BJ (cell line): ENCODE measurements at regions of chr12 and their contacts with region 1.

Region 1: GRCh38 chr12:71636704-71637115 is 26.9 kb downstream of the ZFC3H1 start:
- DNase-seq: peak; percentile 9
- H3K4me3 ChIP-seq: no peak overlapping the region
- H3K27me3 ChIP-seq: no peaks in the 10 kb centered on the region
- CTCF ChIP-seq: peak; percentile 80

Region 2: DNA sequence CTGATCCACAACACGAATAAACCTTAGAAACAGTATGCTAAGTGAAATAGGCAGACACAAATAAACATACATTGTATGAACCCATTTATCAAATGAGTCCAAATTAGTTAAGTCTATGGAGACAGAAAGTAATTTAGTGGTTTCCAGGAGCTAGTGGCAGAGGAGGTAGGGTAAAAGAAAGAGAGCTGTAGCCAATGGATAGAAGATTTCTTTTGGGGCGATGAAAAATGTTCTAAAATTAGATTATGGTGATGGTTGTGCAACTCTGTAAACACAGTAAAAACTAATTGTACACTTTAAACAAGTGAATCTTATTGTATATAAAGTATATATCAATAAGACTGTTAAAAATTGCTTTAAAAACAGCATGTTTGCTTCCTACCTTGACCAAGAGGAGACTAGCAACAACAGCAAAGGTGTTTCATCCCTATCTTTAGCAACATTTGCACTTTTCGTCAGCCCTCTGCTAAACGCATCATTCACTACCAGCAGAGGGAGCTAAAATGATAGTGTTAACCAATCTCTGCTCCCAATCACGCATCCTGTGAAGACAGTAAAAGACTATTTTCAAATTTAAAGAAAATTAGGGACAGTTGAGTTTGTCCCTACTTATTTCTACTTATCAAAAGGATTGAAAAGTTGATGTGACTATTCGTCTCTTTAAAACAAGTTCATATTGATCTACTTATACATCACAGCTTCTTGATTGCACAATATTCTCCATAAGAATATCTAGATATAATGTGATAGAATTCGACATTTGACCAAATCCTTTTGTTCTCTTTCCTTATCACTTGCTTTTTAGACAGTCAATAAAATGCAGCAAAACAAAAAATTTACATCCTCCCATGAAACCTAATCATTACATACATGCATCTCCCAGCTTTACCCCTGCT is 221.1 kb before region 1 on chr12:
- CTCF ChIA-PET with region 1: interaction called, 12 read pairs
- POLR2A ChIA-PET with region 1: no interaction called
- DNase-seq: no peak
- H3K4me3 ChIP-seq: no peak overlapping the region
- H3K27me3 ChIP-seq: 0 out of 2 replicates have a peak, but pooled peaks cover 2% of the 10 kb centered on the region
- CTCF ChIP-seq: peak; percentile 76

Region 3: GRCh38 chr12:71567537-71567936 is 69.2 kb before region 1 on chr12:
- CTCF ChIA-PET with region 1: no interaction called
- POLR2A ChIA-PET with region 1: no interaction called
- DNase-seq: no peak
- H3K4me3 ChIP-seq: no peak overlapping the region
- H3K27me3 ChIP-seq: 0 out of 2 replicates have a peak, but pooled peaks cover 1% of the 10 kb centered on the region
- CTCF ChIP-seq: no peak

Region 4: GRCh38 chr12:71605039-71605438 is 31.7 kb before region 1 on chr12:
- CTCF ChIA-PET with region 1: interaction called, 11 read pairs
- POLR2A ChIA-PET with region 1: no interaction called
- DNase-seq: no peak
- H3K4me3 ChIP-seq: no peak overlapping the region
- H3K27me3 ChIP-seq: no peaks in the 10 kb centered on the region
- CTCF ChIP-seq: no peak

Region 5: DNA sequence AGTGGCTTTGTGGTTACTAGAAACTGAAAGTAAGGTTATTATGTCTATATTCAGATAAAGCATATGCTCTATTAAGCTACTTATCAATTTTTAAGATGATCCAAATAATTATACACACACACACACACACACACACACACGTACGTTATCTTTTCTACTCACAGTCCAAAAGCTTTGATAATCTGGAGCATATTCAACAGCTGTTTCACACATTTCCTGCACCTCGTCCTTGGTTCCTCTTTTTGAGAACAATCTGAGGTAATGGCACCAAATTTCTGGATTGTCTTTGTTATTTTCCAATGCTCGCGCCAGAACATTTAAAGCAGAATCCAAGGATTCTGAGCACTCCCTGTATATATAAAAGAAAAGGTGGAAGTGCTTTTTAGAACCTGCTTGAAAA is 10.6 kb before region 1 on chr12:
- CTCF ChIA-PET with region 1: interaction called, 22 read pairs
- POLR2A ChIA-PET with region 1: no interaction called
- DNase-seq: no peak
- H3K4me3 ChIP-seq: no peak overlapping the region
- H3K27me3 ChIP-seq: no peaks in the 10 kb centered on the region
- CTCF ChIP-seq: no peak

Region 6: DNA sequence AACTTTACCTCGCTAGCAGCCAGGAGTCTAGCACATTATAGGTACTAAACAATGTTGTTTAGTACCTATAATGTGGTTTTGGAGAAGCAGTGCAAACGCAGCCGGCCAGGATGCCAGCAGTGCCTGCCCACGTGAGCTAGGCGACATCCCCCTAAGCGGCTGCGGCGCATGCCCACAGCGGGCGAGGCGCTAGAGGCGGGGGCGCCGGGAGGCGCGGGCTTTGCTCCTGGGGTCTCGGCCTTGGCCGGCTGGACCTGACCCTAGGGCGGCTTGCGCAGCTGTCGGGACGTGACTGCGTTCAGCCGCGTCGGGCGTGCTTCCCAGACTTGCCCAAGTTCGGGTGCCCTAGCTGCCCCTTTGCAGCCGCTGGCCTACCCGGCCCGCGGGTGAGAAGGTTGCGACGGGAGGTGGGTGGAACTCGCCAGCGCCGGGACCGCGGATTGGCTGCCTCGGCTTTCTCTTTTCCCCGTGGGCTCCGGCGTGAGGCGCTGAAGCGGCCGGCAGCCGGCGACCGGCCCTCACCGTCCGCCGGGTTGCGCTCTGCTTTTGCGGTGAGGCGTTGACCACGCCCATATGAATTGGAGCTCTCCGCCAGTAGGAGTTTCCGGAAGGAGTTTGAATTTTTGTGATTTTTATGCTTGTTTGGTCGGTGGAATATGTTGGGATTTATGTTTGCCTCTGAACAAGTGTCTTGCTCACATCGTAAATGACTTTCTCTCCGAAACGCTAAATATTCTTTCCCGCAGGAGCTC is 49.4 kb after region 1 on chr12 and contains the start of gene TMEM19:
- CTCF ChIA-PET with region 1: interaction called, 10 read pairs
- POLR2A ChIA-PET with region 1: no interaction called
- DNase-seq: peak; percentile 56
- H3K4me3 ChIP-seq: peak within 1 kb of the TSS; percentile 85
- H3K27me3 ChIP-seq: no peaks in the 10 kb centered on the region
- CTCF ChIP-seq: peak; percentile 44; the same call in 1 of the 2 replicates
- polyA plus RNA-seq, gene TMEM19: 18.4 and 28.8 TPM in 2 replicates

Region 7: GRCh38 chr12:71746983-71747611 is 110.4 kb after region 1 on chr12:
- CTCF ChIA-PET with region 1: interaction called, 20 read pairs
- POLR2A ChIA-PET with region 1: no interaction called
- DNase-seq: no peak
- H3K4me3 ChIP-seq: no peak overlapping the region
- H3K27me3 ChIP-seq: peaks cover 5% of the 10 kb centered on the region
- CTCF ChIP-seq: peak; percentile 68